RWPE1 (cell line): ENCODE measurements at regions of chr6 and their contacts with region 1.

Region 1: DNA sequence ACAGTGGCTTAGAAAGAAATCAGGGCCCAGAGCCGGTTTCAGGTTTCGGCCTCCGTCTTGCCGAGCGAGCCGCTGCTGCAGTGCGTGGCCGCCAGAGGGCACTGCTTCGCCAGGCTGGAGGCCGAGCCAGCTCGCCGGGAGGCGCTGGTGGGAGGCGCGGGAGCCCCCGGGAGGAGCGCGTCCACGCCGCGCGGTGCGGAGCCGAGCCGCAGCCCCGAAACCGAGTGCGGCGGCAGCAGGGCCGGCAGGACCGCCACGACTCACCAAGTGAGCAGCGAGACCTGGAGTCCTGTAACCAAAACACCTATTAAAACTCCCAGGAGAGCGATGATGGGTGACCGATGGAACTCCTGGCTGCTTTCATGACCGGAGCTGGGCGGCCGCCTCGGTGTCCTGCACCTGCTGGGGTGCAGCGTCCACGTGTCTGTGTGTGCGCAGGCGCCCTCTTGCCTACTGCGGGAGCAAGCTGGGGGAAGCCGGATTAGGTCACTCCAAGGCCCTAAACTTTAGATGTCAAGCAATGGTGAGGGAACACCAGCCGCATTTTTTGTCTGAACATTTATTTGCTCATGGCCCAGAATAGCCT is 186.9 kb upstream of the UST start:
- DNase-seq: peak; percentile 58
- H3K27ac ChIP-seq: no peak overlapping the region
- CTCF ChIP-seq: peak; percentile 96

Region 2: DNA sequence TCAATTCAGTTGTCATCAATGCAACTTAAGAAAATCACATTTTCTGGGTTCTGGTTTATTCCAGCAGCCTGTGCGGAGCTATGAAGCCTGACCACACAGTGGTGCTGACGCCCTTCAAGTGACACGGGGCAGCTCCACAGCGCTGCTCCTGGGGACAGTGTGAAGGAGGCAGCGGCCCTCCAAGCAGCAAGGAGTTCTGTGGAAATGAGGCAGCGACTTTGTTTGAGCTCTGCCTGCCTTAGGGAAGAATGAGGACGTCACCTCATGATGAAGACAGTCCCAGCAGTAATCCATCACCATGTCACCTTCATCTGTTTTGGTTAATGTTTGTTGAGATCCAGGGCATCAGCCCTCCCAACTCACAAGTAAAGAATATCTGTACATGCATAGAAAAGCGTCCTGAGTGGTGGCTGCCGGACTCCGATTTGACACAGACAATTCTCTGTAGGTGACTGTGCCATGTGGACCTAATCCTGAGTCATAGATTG is 18.3 kb after region 1 on chr6:
- CTCF ChIA-PET with region 1: interaction called, 10 read pairs
- POLR2A ChIA-PET with region 1: no interaction called
- DNase-seq: peak; percentile 68
- H3K27ac ChIP-seq: no peak overlapping the region
- CTCF ChIP-seq: peak; percentile 83